ENCODE measurements at regions of chr4 and their contacts with region 1.

Region 1: DNA sequence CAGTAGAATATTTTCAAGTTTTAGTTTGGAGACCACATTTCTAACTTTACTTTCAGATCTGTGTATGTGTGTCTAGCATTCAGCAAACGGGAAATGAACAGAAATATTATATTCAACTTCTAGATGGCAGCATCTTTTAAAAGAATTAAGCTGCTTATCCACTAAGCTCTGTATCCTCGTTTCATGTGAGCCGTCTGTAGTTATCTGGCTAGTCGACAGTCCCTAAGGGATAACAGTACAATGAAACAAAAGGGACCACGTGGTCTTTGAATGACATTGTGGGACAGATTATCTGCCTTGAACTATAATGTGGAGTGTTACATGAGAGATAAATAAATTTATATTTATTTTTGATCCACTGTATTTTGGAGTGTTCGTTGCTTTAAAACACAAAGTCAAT is 35.8 kb upstream of the PRSS12 start:
- DNase-seq: no peak
- ATAC-seq: no peak
- H3K4me3 ChIP-seq: no peak overlapping the region
- H3K27ac ChIP-seq: no peak overlapping the region
- H3K4me1 ChIP-seq: no peaks in the 10 kb centered on the region
- H3K27me3 ChIP-seq: no peaks in the 10 kb centered on the region
- CTCF ChIP-seq: no peak

Region 2: GRCh38 chr4:118012142-118012541 is 376.5 kb before region 1 on chr4:
- intact Hi-C with region 1: no loop called
- DNase-seq: no peak
- ATAC-seq: no peak
- H3K4me3 ChIP-seq: no peak overlapping the region
- H3K27ac ChIP-seq: no peak overlapping the region
- H3K4me1 ChIP-seq: no peaks in the 10 kb centered on the region
- H3K27me3 ChIP-seq: no peaks in the 10 kb centered on the region
- CTCF ChIP-seq: no peak

Region 3: DNA sequence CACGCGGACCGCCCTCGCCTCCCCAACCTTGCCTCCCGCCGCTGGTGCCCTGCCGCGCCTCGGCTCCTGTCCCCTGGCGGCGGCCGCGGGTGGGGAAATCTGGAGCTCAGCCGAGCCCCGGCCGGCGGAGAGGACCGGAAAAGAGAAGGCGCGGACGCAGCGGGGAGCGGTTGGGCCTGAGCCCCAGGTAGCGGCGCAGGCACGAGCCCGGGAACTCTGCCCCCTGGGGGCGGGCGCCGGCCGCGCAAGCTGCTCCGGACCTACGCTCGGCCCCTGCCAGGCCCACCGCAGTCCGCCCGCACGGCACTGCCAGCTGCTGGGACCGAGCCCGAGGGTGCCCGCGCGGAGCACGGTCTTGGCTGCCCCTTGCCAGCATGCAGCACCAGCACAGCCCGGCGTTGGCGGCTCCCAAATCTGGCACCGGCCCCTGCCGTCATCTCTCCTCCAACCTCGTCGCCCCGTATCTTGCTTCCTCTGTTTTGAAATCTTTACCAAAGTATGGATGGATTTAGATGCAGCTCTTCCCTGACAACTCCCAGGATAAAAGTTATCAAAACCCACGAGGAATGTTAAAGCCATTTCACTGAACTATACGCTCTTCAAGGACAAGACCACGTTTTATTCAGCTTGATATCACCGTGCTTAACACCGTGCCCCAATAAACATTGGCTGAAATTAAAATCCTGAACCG is 35.6 kb before region 1 on chr4 and contains the start of gene PRSS12:
- intact Hi-C with region 1: loop called in 1 of 2 experiments (anchors 1 kb)
- DNase-seq: peak; percentile 60 to 72
- ATAC-seq: peak; percentile 82 to 92 (median 86)
- H3K4me3 ChIP-seq: peak within 1 kb of the TSS; percentile 62
- H3K27ac ChIP-seq: no peak within 1 kb of the TSS
- H3K4me1 ChIP-seq: no peaks in the 10 kb centered on the region
- H3K27me3 ChIP-seq: peaks cover 0 to 63% (median 15%) of the 10 kb centered on the region in 3 donors
- CTCF ChIP-seq: peak; percentile 56
- total RNA-seq, gene PRSS12: 0.06 to 0.49 (median 0.18) TPM

Measured in psoas muscle (tissue), 8 donors.